Right lobe of liver (tissue), 6 donors: ENCODE measurements at regions of chr6 and their contacts with region 1.

Region 1: GRCh38 chr6:133184798-133185372 is 56.3 kb upstream of the EYA4 start:
- DNase-seq: no peak
- ATAC-seq: no peak
- H3K4me3 ChIP-seq: no peak overlapping the region
- H3K27ac ChIP-seq: no peak overlapping the region
- H3K4me1 ChIP-seq: no peaks in the 10 kb centered on the region
- H3K27me3 ChIP-seq: no peaks in the 10 kb centered on the region
- CTCF ChIP-seq: peak; percentile 33 to 65 (median 60)
- POLR2A ChIP-seq: no peak

Region 2: DNA sequence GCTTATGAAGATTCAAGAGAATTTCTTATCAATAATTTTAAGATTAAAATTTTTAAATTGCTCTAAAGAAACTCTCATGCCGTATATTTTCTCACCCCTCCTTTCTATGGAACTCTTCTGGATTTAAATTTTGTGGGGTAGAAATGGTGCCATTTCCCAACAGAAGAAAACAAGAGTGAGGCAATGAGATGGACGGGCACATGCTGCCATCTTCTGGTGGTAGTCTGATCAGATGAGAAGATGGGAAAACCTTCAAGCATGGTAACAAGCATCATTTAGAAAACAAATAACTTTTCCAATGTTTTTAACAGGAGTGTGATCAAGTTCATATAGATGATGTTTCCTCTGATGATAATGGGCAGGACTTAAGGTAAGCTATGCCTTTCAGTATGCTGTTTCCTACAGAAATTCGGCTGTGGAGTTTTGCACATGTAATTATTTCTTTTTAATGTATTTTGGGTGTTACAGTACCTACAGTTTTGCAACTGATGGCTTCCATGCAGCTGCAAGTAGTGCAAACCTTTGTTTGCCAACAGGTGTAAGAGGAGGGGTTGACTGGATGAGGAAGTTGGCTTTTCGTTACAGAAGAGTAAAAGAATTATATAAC is 327.6 kb after region 1 on chr6:
- intact Hi-C with region 1: loop called in 1 of 2 experiments (anchors 10 kb)
- DNase-seq: peak in 1 of 3 donors; percentile 52
- ATAC-seq: peak; percentile 80 to 85 (median 82)
- H3K4me3 ChIP-seq: no peak overlapping the region
- H3K27ac ChIP-seq: no peak overlapping the region
- H3K4me1 ChIP-seq: peaks cover 0 to 3% (median 0%) of the 10 kb centered on the region in 4 donors
- H3K27me3 ChIP-seq: no peaks in the 10 kb centered on the region
- CTCF ChIP-seq: peak; percentile 57 to 81 (median 74)
- POLR2A ChIP-seq: no peak